CD8-positive, alpha-beta memory T cell (primary cell): ENCODE measurements at regions of chr14 and their contacts with region 1.

Region 1: GRCh38 chr14:104752735-104753531 is at the start of gene SIVA1:
- DNase-seq: peak; percentile 98 to 99 (median 99)
- H3K4me3 ChIP-seq: peak within 1 kb of the TSS; percentile 87
- H3K4me3 Mint-ChIP-seq: peak within 1 kb of the TSS; percentile 88 to 93 (median 92)
- H3K27ac ChIP-seq: peak within 1 kb of the TSS; percentile 91
- H3K27ac Mint-ChIP-seq: peak within 1 kb of the TSS; percentile 86 to 97 (median 92)
- H3K4me1 ChIP-seq: peaks cover 20% of the 10 kb centered on the region
- H3K4me1 Mint-ChIP-seq: peaks cover 27 to 58% (median 28%) of the 10 kb centered on the region in 3 donors
- H3K27me3 ChIP-seq: no peaks in the 10 kb centered on the region
- H3K27me3 Mint-ChIP-seq: no peaks in the 10 kb centered on the region
- total RNA-seq, gene SIVA1: 150 to 175 TPM

Region 2: GRCh38 chr14:104768437-104769323 is 15.7 kb after region 1 on chr14:
- CTCF ChIA-PET with region 1: interaction called, 14 read pairs
- POLR2A ChIA-PET with region 1: interaction called, 7 read pairs
- DNase-seq: peak; percentile 80 to 91 (median 86)
- H3K4me3 ChIP-seq: no peak overlapping the region
- H3K4me3 Mint-ChIP-seq: no peak overlapping the region
- H3K27ac ChIP-seq: no peak overlapping the region
- H3K27ac Mint-ChIP-seq: peak overlapping the region in 3 of 8 donors; percentile 11 to 75 (median 51)
- H3K4me1 ChIP-seq: no peaks in the 10 kb centered on the region
- H3K4me1 Mint-ChIP-seq: peaks cover 0 to 15% (median 3%) of the 10 kb centered on the region in 3 donors
- H3K27me3 ChIP-seq: no peaks in the 10 kb centered on the region
- H3K27me3 Mint-ChIP-seq: no peaks in the 10 kb centered on the region

Region 3: GRCh38 chr14:104786091-104786586 is 33.2 kb after region 1 on chr14:
- CTCF ChIA-PET with region 1: no interaction called
- POLR2A ChIA-PET with region 1: no interaction called
- DNase-seq: no peak
- H3K4me3 ChIP-seq: no peak overlapping the region
- H3K4me3 Mint-ChIP-seq: peak overlapping the region in 1 of 7 donors; percentile 40
- H3K27ac ChIP-seq: no peak overlapping the region
- H3K27ac Mint-ChIP-seq: peak overlapping the region in 5 of 8 donors; percentile 14 to 81 (median 42)
- H3K4me1 ChIP-seq: peaks cover 9% of the 10 kb centered on the region
- H3K4me1 Mint-ChIP-seq: peaks cover 0 to 35% (median 9%) of the 10 kb centered on the region in 3 donors
- H3K27me3 ChIP-seq: no peaks in the 10 kb centered on the region
- H3K27me3 Mint-ChIP-seq: no peaks in the 10 kb centered on the region

Region 4: GRCh38 chr14:104800015-104800770 is 47.3 kb after region 1 on chr14:
- CTCF ChIA-PET with region 1: no interaction called
- POLR2A ChIA-PET with region 1: interaction called, 11 read pairs
- DNase-seq: peak; percentile 73 to 89 (median 79)
- H3K4me3 ChIP-seq: peak overlapping the region; percentile 2
- H3K4me3 Mint-ChIP-seq: peak overlapping the region; percentile 69 to 89 (median 77)
- H3K27ac ChIP-seq: peak overlapping the region; percentile 59
- H3K27ac Mint-ChIP-seq: peak overlapping the region; percentile 37 to 91 (median 84)
- H3K4me1 ChIP-seq: peaks cover 30% of the 10 kb centered on the region
- H3K4me1 Mint-ChIP-seq: peaks cover 15 to 62% (median 23%) of the 10 kb centered on the region in 3 donors
- H3K27me3 ChIP-seq: no peaks in the 10 kb centered on the region
- H3K27me3 Mint-ChIP-seq: no peaks in the 10 kb centered on the region